Left colon (tissue), 2 donors: ENCODE measurements at regions of chr12 and their contacts with region 1.

Region 1: DNA sequence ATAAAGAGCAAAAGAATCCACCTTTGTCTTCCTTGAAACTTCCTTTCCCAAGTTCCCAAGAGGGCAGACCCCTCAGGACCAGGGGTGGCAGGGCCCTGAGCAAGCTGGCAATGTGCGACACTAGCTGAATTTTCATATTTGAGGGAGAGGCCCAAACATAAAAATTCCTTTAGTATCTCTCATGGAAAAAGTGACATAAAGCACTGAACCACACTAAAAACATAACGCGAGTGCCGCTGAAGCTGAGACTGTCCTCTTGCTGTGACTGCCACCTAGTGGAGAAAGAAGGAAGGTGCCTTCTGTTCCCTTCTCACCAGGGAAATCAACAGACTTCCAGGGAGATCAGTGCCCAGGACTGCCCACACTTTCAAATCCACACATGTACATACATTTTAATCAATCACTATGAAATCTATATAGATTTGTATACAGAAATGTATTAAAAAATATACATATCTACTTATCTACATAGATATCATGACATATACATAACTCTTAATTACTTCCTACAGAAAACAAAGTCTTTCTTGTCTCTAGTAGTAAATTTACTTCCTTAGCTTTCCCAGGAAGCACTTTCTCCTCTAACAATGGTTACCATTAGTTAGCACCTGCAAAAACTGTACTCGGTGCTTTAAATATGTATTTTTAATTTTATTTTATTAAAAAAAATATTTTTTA is 53.8 kb downstream of the SSH1 start:
- DNase-seq: peak; percentile 68 to 76
- ATAC-seq: peak; percentile 89

Region 2: GRCh38 chr12:108664338-108665258 is 139.0 kb before region 1 on chr12:
- intact Hi-C with region 1: loop called (anchors 2 to 5 kb)
- DNase-seq: peak; percentile 77 to 79
- ATAC-seq: peak; percentile 95

Region 3: DNA sequence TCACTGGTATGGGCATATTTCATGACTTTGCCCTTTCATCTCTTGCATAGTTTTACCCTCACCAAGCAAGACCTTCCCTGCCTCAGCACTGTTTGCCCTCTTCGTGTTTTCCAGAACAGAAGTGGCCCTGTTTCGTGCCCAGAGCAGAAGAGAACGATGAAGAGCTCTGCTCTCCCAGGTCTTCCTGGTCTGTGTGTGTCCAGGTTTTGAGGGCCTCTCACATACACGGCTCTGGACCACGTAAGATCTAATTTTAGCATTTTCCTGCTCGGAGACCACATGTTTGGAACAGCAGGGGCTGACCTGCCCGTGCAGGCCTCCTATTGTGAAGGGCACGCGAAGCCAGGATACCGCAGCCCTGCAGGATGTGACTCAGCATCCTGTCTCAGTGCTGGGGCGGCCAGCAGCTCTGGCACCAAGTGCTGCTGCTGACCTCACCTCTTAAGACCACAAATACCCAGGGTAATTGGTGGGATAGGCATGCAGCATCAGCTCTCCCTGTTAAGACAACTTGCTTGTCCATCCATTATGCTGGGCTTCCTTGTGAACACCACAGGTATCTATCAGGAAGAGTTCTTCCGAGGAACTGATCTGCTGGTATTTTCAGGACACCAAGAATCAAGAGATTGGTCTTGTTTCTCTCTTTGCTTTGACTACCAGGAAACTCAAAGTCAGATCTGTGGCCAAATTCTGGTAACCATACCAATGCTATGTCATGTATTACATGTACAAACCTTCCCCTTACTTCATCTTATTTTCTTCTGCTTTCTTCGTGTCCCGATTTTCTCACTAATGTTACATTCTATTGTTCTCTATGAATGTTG is 34.8 kb after region 1 on chr12:
- intact Hi-C with region 1: no loop called
- DNase-seq: peak; percentile 65 to 77
- ATAC-seq: peak; percentile 66

Region 4: DNA sequence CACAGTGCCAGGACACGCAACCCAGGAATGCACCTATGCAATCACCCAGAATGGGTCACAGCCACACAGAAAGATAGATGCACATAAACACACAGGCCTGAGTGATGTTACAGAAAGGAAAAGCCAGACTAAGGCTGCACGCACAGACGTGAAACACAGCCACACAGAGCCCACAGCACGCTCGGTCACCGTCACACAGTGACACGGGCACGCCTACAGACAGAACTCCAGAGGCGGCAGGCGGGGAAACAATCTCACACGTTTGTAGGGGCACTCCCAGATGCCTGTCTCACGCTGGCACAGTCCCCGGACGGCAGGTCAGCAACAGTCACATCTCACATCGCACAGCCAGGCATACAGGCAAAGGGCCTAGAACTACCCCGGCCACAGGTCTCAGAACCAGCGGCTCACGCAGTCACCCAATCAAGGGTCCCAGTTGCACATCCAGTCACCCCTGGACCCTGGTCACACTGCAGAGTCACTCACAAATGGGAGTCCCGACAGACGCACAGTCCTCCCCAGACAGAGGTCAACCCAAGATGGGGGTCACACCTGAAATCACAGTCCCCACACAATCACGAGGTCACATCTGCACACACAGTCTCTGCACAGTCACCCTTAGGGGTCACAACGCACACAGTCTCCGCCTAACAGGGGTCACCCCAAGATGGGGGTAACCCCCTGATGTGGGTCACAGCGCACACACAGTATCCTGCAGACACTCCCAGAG is 53.0 kb after region 1 on chr12:
- intact Hi-C with region 1: loop called in 1 of 2 experiments (anchors 10 kb)
- DNase-seq: peak; percentile 80 to 81
- ATAC-seq: peak; percentile 68